A549 (cell line): ENCODE measurements at regions of chr7 and their contacts with region 1.

Region 1: GRCh38 chr7:542713-543500 is 23.3 kb upstream of the PDGFA start:
- DNase-seq: peak; percentile 76 to 81
- ATAC-seq: peak; percentile 27 to 52
- H3K4me3 ChIP-seq: no peak overlapping the region
- H3K27ac ChIP-seq: peak overlapping the region; percentile 79 to 96
- H3K4me1 ChIP-seq: peaks cover 50% of the 10 kb centered on the region
- CTCF ChIP-seq: no peak
- EP300 ChIP-seq: no peak; a peak in 1 of 5 replicates
- POLR2A ChIP-seq: no peak
- RAD21 ChIP-seq: no peak; a peak in 1 of 5 replicates

Region 2: GRCh38 chr7:518630-519483 is 24.1 kb before region 1 on chr7:
- CTCF ChIA-PET with region 1: interaction called, 35 read pairs
- POLR2A ChIA-PET with region 1: interaction called, 18 read pairs
- DNase-seq: peak; percentile 60 to 87
- ATAC-seq: peak; percentile 59 to 76
- H3K4me3 ChIP-seq: peak overlapping the region; percentile 74
- H3K27ac ChIP-seq: peak overlapping the region; percentile 89 to 94
- H3K4me1 ChIP-seq: peaks cover 36% of the 10 kb centered on the region
- CTCF ChIP-seq: no peak
- EP300 ChIP-seq: no peak
- POLR2A ChIP-seq: peak; percentile 61
- RAD21 ChIP-seq: no peak; a peak in 1 of 5 replicates

Region 3: GRCh38 chr7:552868-553635 is 10.1 kb after region 1 on chr7:
- CTCF ChIA-PET with region 1: no interaction called
- POLR2A ChIA-PET with region 1: no interaction called
- DNase-seq: no peak
- ATAC-seq: no peak
- H3K4me3 ChIP-seq: no peak overlapping the region
- H3K27ac ChIP-seq: no peak overlapping the region
- H3K4me1 ChIP-seq: no peaks in the 10 kb centered on the region
- CTCF ChIP-seq: no peak
- EP300 ChIP-seq: no peak
- POLR2A ChIP-seq: no peak
- RAD21 ChIP-seq: no peak

Region 4: DNA sequence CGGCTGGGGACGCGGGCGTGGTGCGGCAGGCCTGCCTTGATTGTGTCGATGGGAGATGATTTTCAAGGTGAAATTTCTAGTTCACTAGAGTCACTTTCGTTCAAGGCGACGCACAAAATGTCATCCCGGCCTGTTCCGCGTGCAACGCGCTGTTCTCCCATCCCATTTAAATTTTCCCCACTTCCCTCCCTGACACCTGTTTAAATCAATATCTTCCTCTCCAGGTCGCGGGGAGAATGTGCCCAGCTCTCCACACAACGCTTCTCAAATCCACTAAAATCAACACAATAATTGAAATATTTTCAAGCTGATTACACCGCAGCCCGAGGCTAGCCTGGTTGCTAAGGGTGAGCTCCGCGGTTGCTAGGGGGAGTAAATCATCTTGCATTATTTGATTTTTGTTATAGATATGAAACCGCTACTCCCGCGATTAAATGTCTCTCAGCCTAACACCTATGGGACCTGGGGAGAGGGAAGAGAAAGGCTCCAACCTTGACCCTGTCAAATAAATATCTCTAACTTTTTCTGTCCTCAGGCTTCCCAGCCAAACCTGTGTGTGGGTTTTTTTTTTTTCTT is 725.9 kb after region 1 on chr7:
- CTCF ChIA-PET with region 1: no interaction called
- POLR2A ChIA-PET with region 1: no interaction called
- DNase-seq: no peak
- ATAC-seq: no peak; a peak in 2 of 6 replicates
- H3K4me3 ChIP-seq: no peak overlapping the region
- H3K27ac ChIP-seq: no peak overlapping the region
- H3K4me1 ChIP-seq: no peaks in the 10 kb centered on the region
- CTCF ChIP-seq: no peak
- EP300 ChIP-seq: no peak
- POLR2A ChIP-seq: no peak
- RAD21 ChIP-seq: no peak